Ascending aorta (tissue), 2 donors: ENCODE measurements at regions of chr1 and their contacts with region 1.

Region 1: DNA sequence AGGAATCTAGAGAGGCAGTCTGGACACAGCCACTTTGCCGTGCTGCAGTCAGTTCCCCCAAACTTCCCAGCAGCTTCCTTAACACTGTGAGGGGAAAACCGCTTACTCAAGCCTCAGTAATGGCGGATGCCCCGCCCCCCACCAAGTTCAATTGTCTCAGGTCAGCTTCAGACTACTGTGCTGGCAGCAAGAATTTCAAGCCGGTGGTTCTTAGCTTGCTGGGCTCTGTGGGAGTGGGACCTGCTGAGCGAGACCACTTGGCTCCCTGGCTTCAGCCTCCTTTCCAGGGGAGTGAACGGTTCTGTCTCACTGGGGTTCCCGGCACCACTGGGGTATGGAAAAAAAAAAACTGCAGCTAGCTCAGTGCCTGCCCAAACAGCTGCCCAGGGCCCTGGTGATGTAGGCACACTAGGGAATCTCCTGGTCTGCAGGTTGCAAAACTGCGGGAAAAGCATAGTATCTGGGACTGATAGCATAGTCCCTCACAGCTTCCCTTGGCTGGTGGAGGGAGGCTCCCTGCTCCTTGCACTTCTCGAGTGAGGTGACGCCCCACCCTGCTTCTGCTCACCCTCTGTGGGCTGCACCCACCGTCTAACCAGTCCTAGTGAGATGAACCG is 23.7 kb upstream of the HFM1 start:
- DNase-seq: no peak
- H3K4me3 ChIP-seq: no peak overlapping the region
- H3K27ac ChIP-seq: no peak overlapping the region
- H3K4me1 ChIP-seq: no peaks in the 10 kb centered on the region
- H3K27me3 ChIP-seq: no peaks in the 10 kb centered on the region
- CTCF ChIP-seq: no peak

Region 2: DNA sequence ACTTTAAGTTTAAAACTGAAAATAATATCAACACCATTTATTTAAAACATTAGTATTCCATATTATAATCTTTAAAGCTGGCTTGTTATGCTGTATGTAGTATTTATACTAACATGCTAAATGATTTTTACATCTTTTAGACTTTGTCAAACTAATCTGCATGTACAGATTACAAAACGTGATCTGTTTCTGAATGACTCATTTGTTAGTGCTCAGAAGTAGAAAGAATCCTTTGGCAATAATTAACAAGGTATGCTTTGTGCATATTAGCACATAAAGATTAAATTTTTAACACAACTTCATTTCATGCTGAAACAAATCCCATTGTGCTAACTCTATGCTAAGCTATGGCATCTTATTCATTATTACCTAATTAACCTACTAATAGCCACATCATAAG is 953.6 kb before region 1 on chr1:
- intact Hi-C with region 1: loop called (anchors 5 kb)
- DNase-seq: no peak
- H3K4me3 ChIP-seq: no peak overlapping the region
- H3K27ac ChIP-seq: no peak overlapping the region
- H3K4me1 ChIP-seq: no peaks in the 10 kb centered on the region
- H3K27me3 ChIP-seq: no peaks in the 10 kb centered on the region
- CTCF ChIP-seq: no peak

Region 3: DNA sequence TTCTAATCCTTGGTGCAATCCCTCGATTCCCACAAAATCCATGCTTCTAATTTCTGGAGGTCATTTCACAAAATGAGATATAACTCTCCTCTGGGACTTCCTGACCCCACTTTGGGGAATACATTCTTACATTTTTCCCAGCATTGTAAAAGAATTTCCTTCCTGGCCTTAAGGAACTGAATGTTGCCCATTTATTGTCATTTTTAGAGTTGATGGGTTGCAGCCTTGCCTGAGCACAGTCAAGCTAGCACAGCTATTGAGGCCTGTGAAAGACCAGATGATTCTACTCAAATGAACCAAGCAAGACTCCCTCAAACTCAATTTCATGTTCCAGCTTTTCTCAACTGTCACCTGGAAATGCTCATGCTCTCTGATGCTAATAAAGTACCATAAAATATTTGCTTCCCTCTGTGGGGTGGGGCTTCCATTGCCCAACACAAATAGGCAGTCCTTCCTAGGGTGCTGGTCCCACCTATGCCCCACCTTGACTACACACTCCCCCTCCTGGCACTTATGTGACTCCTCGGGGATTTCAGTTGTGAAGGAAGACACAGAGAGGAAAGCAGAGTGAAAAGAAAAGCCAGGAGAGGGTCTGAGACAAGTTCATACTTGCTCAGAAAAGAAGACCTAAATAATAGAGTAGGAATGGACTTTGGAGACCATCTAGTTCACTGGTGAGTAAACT is 48.4 kb after region 1 on chr1:
- intact Hi-C with region 1: no loop called
- DNase-seq: no peak
- H3K4me3 ChIP-seq: no peak overlapping the region
- H3K27ac ChIP-seq: no peak overlapping the region
- H3K4me1 ChIP-seq: no peaks in the 10 kb centered on the region
- H3K27me3 ChIP-seq: no peaks in the 10 kb centered on the region
- CTCF ChIP-seq: no peak